ENCODE measurements at regions of chr1 and their contacts with region 1.

Region 1: DNA sequence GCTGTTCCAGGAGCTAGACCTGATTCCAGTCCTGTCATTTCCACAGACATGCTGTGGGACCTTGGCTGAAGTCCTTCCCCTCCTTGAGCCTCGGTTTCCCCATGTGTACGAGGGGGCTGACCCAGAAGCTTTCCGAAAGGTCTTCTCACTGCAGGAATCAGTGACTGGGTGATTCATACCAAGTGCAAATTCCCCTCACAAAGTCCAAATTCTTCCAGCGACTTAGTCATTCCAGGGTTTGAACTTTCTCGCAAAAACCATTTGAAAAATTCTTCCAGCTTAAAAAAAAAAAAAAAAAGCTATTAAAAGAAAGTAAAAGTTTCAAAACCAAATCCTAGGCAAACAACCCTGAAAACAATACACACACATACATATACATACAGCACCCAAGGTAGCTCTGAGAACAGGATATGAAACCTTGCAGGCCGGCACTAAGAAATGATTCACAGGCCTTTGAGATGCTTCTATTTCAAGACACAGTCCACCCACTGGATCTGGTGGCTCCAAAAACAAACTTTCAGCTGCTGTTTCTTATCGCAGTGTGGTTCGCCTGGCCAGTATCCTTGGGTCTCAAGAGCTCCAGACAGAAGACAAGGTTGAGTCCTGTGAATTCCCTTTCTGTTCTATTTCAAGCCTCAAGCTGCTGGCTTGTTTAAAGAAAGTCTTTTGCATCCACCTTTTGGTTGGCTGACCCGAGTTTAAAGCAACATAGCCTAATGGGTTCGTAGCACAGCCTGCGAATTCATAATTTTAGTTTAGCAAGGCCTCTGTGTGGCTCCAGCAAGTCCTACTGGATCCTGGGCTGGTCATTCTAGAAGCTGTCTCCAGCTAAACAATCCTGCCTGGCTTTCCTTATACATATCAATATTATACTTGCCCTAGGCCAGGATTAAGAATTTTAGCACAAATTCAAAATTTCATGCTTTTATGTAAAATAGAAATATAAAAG is 18.0 kb upstream of the ID3 start:
- DNase-seq: peak in 1 of 2 experiments; percentile 85
- ATAC-seq: peak; percentile 90 to 93
- H3K4me3 ChIP-seq: peak overlapping the region; percentile 16; the same call in 2 of the 3 replicates
- H3K27ac ChIP-seq: peak overlapping the region; percentile 96 to 100
- H3K4me1 ChIP-seq: peaks cover 67% of the 10 kb centered on the region
- CTCF ChIP-seq: no peak
- EP300 ChIP-seq: peak; percentile 69 to 82; a peak in 4 of 5 replicates
- POLR2A ChIP-seq: no peak
- RAD21 ChIP-seq: peak in 1 of 2 experiments; percentile 1; a peak in 2 of 5 replicates

Region 2: DNA sequence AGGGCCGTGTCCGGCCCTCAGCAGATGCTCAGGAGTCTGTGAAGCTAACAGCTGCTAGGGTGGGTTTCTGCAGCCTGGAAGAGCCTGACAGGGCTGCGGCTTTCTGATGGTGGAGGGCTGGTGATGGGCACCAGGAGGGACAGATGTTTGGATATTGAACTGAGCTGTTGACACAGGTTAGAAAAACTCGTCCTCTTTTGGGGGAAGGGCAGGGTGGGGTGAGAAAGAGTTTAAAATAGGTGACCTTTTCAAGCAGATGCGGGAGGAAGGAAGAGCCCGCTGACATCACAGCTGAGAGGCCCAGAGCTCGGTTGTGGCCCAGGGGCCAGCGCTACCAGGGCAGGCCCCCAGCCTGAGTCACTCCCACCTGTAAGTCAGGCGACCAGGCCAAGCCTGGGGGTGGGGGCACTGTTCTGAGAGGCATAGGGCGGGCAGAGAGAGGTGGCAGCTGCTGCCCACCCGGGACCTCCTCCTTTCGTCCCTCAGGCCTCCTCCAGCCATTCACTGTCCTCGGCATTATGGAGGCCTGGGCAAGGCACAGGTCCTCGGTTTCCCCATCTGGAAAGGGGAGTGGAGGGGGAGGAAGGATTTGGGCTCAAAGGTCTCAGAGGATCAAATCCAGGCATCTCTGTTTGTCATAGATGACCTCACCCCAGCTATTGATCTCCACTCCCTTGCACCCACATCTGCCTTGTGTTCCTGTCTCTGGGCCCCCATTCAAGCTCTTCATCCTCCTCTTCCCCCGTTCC is 14.3 kb after region 1 on chr1:
- CTCF ChIA-PET with region 1: interaction called, 7 read pairs
- POLR2A ChIA-PET with region 1: interaction called, 15 read pairs
- DNase-seq: peak; percentile 42 to 86
- ATAC-seq: peak; percentile 78
- H3K4me3 ChIP-seq: no peak overlapping the region
- H3K27ac ChIP-seq: peak overlapping the region; percentile 96 to 100
- H3K4me1 ChIP-seq: peaks cover 96% of the 10 kb centered on the region
- CTCF ChIP-seq: no peak
- EP300 ChIP-seq: peak; percentile 83 to 85; a peak in 4 of 5 replicates
- POLR2A ChIP-seq: no peak
- RAD21 ChIP-seq: peak in 1 of 2 experiments; percentile 25; a peak in 2 of 5 replicates